CD4-positive, alpha-beta T cell (primary cell): ENCODE measurements at regions of chr22 and their contacts with region 1.

Region 1: GRCh38 chr22:32103658-32104315 is 55.3 kb downstream of the C22orf42 start:
- DNase-seq: peak in 3 of 14 experiments; percentile 41 to 50 (median 44)
- ATAC-seq: no peak
- H3K4me3 ChIP-seq: no peak overlapping the region
- H3K4me3 Mint-ChIP-seq: no peak overlapping the region
- H3K27ac ChIP-seq: no peak overlapping the region
- H3K27ac Mint-ChIP-seq: no peak overlapping the region
- H3K4me1 ChIP-seq: no peaks in the 10 kb centered on the region
- H3K4me1 Mint-ChIP-seq: no peaks in the 10 kb centered on the region
- H3K27me3 ChIP-seq: peaks cover 0 to 1% of the 10 kb centered on the region in 2 experiments
- H3K27me3 Mint-ChIP-seq: peaks cover 44% of the 10 kb centered on the region
- CTCF ChIP-seq: peak; percentile 61

Region 2: DNA sequence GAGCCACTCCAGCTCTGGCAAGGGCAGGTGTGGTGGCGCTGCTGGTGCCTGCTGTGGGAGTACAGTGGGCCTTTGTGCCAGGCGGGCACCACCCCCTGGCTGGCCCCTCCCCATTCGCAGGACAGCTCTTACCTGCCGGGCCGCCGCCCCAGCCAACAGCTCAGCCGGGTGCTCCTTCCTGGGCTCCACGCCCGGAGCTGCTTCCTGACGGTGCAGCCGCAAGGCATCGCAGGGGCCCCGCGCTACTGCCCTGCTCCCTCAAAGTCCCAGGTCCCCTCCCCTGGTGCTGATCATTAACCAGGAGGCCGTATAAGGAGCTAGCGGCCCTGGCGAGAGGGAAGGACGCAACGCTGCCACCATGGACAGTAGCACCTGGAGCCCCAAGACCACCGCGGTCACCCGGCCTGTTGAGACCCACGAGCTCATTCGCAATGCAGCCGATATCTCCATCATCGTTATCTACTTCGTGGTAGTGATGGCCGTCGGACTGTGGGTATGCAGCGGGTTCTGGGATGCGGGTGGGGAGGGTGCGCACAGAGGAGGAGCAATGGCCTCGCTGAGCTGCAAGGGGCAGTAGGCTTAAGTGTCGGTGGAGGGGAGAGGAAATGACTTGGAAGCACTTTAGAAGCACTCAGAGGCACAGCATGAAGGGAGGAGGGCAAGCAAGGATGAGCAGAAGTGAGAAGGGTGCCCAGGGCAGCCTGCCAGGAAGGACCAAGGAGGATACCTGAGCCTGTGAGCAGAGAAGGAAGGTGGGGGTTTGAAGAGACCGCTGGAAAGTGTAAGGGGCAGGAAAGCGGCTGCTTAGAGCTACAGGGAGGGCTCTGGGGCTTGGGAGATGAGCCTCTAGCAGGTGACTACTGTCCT is 60.6 kb before region 1 on chr22 and contains the start of gene SLC5A1:
- CTCF ChIA-PET with region 1: no interaction called
- POLR2A ChIA-PET with region 1: no interaction called
- intact Hi-C with region 1: loop called in 1 of 2 experiments (anchors 10 kb)
- DNase-seq: no peak
- ATAC-seq: no peak
- H3K4me3 ChIP-seq: no peak within 1 kb of the TSS
- H3K4me3 Mint-ChIP-seq: no peak within 1 kb of the TSS
- H3K27ac ChIP-seq: no peak within 1 kb of the TSS
- H3K27ac Mint-ChIP-seq: no peak within 1 kb of the TSS
- H3K4me1 ChIP-seq: no peaks in the 10 kb centered on the region
- H3K4me1 Mint-ChIP-seq: no peaks in the 10 kb centered on the region
- H3K27me3 ChIP-seq: peaks cover 24 to 38% of the 10 kb centered on the region in 2 experiments
- H3K27me3 Mint-ChIP-seq: peaks cover 78% of the 10 kb centered on the region
- CTCF ChIP-seq: no peak
- total RNA-seq, gene SLC5A1: not detected

Region 3: GRCh38 chr22:32175683-32176644 is 72.2 kb after region 1 on chr22:
- CTCF ChIA-PET with region 1: no interaction called
- POLR2A ChIA-PET with region 1: no interaction called
- intact Hi-C with region 1: loop called in 1 of 2 experiments (anchors 5 kb)
- DNase-seq: peak in 2 of 14 experiments; percentile 10 to 31
- ATAC-seq: no peak
- H3K4me3 ChIP-seq: peak overlapping the region; percentile 33
- H3K4me3 Mint-ChIP-seq: no peak overlapping the region
- H3K27ac ChIP-seq: no peak overlapping the region
- H3K27ac Mint-ChIP-seq: no peak overlapping the region
- H3K4me1 ChIP-seq: peaks cover 9% of the 10 kb centered on the region
- H3K4me1 Mint-ChIP-seq: no peaks in the 10 kb centered on the region
- H3K27me3 ChIP-seq: peaks cover 22 to 24% of the 10 kb centered on the region in 2 experiments
- H3K27me3 Mint-ChIP-seq: peaks cover 41% of the 10 kb centered on the region
- CTCF ChIP-seq: no peak

Region 4: DNA sequence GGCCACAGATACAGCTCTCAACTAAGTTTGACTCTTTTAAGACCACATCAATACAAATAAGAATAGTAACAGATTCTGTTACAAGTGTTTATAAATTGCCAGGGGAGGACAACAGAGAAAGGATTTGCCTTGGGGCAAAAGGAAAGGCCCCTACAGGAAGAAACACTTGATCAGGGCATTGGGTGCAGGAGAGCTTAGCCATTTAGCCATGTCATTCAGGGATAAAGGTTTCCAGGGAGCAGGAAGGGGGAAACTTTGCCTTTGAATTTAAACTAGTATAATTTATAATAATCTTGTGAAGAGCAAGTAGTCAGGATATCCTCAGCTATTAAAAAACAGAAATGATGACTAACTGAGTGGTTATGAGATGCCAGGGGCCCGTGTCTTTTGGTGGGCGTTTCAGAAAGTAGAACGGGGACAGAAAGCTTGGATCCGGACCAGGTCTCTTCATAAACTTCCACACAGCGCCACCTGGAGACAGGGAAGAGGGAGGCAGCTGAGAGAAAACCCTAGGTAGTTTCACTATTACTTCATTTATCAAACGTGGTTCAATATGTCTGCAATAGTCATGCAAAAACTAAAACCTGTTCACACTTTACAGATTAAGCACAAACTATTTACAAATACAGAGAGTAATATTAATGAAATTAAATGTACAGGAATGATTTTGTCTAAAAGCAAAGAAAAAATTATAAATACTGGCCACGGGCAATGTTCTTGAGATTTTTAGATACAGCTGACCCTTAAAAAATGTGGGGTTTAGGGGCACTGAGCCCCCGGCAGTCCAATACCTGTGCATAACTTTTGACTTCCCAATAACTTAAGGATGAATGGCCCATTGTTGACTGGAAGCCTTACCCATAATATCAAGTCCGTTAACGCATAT is 162.3 kb after region 1 on chr22:
- CTCF ChIA-PET with region 1: interaction called, 5 read pairs
- POLR2A ChIA-PET with region 1: no interaction called
- intact Hi-C with region 1: loop called (anchors 1 kb)
- DNase-seq: peak; percentile 40 to 81 (median 56)
- ATAC-seq: peak; percentile 66
- H3K4me3 ChIP-seq: no peak overlapping the region
- H3K4me3 Mint-ChIP-seq: no peak overlapping the region
- H3K27ac ChIP-seq: no peak overlapping the region
- H3K27ac Mint-ChIP-seq: no peak overlapping the region
- H3K4me1 ChIP-seq: peaks cover 4% of the 10 kb centered on the region
- H3K4me1 Mint-ChIP-seq: peaks cover 10% of the 10 kb centered on the region
- H3K27me3 ChIP-seq: no peaks in the 10 kb centered on the region
- H3K27me3 Mint-ChIP-seq: peaks cover 9% of the 10 kb centered on the region
- CTCF ChIP-seq: peak; percentile 86

Region 5: DNA sequence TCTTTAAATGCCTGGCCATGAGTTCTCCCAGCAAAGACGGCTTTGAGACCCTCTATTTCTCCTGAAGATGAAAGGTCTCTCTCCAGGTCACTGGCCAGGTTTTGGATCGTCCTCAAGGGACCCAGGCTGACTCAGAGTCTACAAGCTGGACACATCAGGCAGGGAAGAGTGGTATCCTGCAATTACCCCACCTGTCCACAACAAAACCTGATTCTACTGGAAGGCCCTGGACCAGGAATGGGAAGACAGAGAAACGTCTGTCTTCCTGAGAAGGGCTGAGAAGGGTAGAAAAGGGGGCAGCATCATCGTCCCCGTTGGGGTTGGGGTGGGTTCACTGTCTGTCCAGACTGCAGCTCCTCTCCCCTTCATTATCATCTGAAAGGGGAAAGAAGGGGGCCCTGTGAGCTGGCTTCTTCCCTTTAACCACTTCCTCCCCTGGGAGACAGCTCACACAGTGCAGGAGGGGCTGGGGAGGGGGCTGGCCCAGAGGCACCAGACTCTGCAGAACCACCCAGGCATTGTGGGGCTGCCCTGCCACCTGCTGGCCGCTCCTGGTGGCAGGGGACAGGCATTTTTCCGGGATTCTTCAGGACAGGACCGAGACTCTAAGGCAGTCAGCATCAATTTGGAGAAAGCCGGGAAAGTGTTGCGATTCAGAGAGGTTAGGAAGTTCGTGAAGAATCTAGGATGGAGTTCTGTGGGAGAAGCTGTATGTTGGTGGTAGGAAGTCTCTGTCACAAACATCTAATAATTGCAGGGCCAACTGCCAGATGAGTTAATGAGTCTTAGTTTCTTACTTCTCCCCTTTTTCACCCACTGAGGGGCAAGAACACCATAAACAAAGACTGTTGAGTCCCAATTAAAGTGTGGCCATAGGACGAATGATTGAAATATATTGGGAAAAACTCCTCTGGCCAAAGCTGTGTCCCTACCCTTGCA is 896.8 kb after region 1 on chr22:
- CTCF ChIA-PET with region 1: no interaction called
- POLR2A ChIA-PET with region 1: no interaction called
- intact Hi-C with region 1: loop called (anchors 2 to 5 kb)
- DNase-seq: peak in 10 of 14 experiments; percentile 3 to 41 (median 14)
- ATAC-seq: no peak
- H3K4me3 ChIP-seq: no peak overlapping the region
- H3K4me3 Mint-ChIP-seq: no peak overlapping the region
- H3K27ac ChIP-seq: no peak overlapping the region
- H3K27ac Mint-ChIP-seq: no peak overlapping the region
- H3K4me1 ChIP-seq: no peaks in the 10 kb centered on the region
- H3K4me1 Mint-ChIP-seq: no peaks in the 10 kb centered on the region
- H3K27me3 ChIP-seq: no peaks in the 10 kb centered on the region
- H3K27me3 Mint-ChIP-seq: peaks cover 9% of the 10 kb centered on the region
- CTCF ChIP-seq: peak; percentile 69